SK-N-SH (cell line): ENCODE measurements at regions of chr10 and their contacts with region 1.

Region 1: DNA sequence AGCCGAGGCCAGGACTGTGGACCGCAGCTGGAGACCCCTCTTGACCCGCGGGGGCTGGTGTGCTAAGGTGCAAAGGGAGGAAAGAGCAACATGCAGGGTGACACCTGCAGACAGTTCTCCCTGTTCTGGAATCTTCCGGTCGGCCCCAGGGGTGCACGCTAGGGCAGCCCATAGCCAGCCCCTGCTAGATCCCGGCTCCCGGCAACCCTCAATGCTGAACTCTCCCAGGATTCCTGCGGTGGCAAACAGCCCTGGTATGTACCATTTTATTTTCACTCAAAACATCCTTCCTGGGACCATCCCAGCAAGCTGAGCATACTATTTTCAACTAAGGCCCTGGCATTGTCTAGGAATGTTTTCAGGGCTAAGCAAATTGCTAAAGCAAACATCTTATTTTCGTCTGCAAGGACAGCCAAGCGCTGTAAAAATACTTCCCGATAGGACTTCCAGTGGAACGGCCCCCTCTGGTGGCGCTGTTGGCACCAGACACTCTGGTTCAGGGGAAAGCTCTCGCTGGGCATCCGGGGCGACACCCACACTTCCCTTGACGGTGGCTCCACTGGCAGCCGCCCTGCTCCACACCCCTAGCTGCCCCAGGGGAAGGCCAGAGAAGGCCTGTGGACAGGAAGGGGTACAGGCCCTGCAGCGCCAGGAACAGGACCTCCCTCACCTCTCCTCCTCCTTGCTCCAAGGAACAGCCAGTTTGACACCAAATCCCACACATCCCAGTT is 99.4 kb downstream of the CTBP2 start:
- DNase-seq: peak; percentile 86
- H3K4me3 ChIP-seq: no peak overlapping the region
- H3K27ac ChIP-seq: peak overlapping the region; percentile 51 to 52; a peak in 3 of 4 replicates
- H3K4me1 ChIP-seq: peaks cover 48 to 62% of the 10 kb centered on the region in 2 experiments
- H3K27me3 ChIP-seq: no peaks in the 10 kb centered on the region
- CTCF ChIP-seq: peak; percentile 88
- EP300 ChIP-seq: no peak
- RAD21 ChIP-seq: peak; percentile 87

Region 2: DNA sequence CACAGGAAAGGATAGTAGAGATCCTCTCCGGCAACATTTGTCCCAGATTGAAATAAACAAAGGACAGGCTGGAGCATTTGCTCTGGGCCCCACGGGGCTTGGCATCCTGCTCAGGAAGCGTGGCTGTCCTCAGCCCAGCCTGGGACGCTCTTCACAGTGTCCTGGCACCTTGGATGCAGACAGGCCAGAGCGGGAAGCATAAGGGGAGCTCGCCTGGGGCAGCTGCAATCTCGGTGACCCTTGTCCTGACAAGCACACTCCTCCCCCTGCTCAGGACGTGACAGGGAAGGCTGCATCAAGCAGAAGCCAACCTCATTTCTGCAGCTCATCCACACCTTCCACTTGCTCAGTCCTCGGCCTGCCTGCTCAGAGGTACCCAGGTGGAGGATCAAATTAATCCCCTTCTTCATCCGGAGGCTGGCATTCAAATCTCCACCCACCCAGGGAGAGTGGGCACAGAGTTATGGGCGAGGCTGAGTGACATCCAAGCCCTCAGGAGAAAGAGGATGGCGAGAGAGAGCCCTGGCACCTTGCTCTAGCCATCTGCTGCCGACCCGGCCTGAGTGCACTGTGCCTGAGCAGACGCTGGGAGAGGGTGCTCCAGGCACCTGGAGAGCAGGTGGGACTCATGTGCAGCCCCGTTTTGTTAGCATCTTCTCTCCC is 211.7 kb before region 1 on chr10:
- CTCF ChIA-PET with region 1: no interaction called
- POLR2A ChIA-PET with region 1: no interaction called
- DNase-seq: no peak
- H3K4me3 ChIP-seq: no peak overlapping the region
- H3K27ac ChIP-seq: no peak overlapping the region
- H3K4me1 ChIP-seq: peaks cover 0 to 8% of the 10 kb centered on the region in 2 experiments; a peak in 1 of 4 replicates
- H3K27me3 ChIP-seq: no peaks in the 10 kb centered on the region
- CTCF ChIP-seq: no peak
- EP300 ChIP-seq: no peak
- RAD21 ChIP-seq: no peak

Region 3: DNA sequence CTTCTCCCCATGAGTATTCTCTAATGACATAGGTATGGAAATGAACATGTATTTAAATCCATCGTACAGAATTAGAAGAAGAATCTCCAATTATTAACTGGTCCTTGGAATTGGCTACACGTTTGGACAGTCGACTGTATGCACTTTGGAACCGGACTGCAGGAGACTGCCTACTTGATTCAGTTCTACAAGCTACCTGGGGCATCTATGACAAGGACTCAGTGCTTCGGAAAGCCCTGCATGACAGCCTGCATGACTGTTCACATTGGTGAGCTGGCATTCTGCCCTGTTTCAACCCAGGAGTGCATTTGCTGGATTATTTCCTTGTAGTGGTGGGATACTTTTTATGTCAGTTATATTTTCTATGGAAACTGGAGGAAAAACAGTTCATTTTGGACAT is 86.9 kb before region 1 on chr10:
- CTCF ChIA-PET with region 1: interaction called, 16 read pairs
- POLR2A ChIA-PET with region 1: no interaction called
- DNase-seq: no peak
- H3K4me3 ChIP-seq: no peak overlapping the region
- H3K27ac ChIP-seq: no peak overlapping the region
- H3K4me1 ChIP-seq: no peaks in the 10 kb centered on the region; a peak in 1 of 4 replicates
- H3K27me3 ChIP-seq: no peaks in the 10 kb centered on the region
- CTCF ChIP-seq: no peak
- EP300 ChIP-seq: no peak
- RAD21 ChIP-seq: no peak

Region 4: GRCh38 chr10:124992462-124993344 is 68.3 kb before region 1 on chr10:
- CTCF ChIA-PET with region 1: interaction called, 88 read pairs
- POLR2A ChIA-PET with region 1: interaction called, 4 read pairs
- DNase-seq: peak; percentile 59
- H3K4me3 ChIP-seq: no peak overlapping the region
- H3K27ac ChIP-seq: peak overlapping the region; percentile 2 to 14; a peak in 2 of 4 replicates
- H3K4me1 ChIP-seq: no peaks in the 10 kb centered on the region; a peak in 1 of 4 replicates
- H3K27me3 ChIP-seq: no peaks in the 10 kb centered on the region
- CTCF ChIP-seq: peak; percentile 75
- EP300 ChIP-seq: no peak
- RAD21 ChIP-seq: peak; percentile 72

Region 5: GRCh38 chr10:125006921-125007426 is 54.0 kb before region 1 on chr10:
- CTCF ChIA-PET with region 1: interaction called, 14 read pairs
- POLR2A ChIA-PET with region 1: interaction called, 8 read pairs
- DNase-seq: peak; percentile 92
- H3K4me3 ChIP-seq: no peak overlapping the region
- H3K27ac ChIP-seq: peak overlapping the region; percentile 12 to 98; a peak in 3 of 4 replicates
- H3K4me1 ChIP-seq: peaks cover 0 to 93% of the 10 kb centered on the region in 2 experiments; a peak in 2 of 4 replicates
- H3K27me3 ChIP-seq: no peaks in the 10 kb centered on the region
- CTCF ChIP-seq: no peak
- EP300 ChIP-seq: peak in 1 of 2 experiments; percentile 65; a peak in 1 of 4 replicates
- RAD21 ChIP-seq: no peak; the same call in 1 of the 2 replicates

Region 6: GRCh38 chr10:125038637-125039036 is 22.4 kb before region 1 on chr10:
- CTCF ChIA-PET with region 1: interaction called, 211 read pairs
- POLR2A ChIA-PET with region 1: no interaction called
- DNase-seq: no peak
- H3K4me3 ChIP-seq: no peak overlapping the region
- H3K27ac ChIP-seq: peak overlapping the region in 1 of 2 experiments; percentile 13; a peak in 1 of 4 replicates
- H3K4me1 ChIP-seq: peaks cover 56 to 66% of the 10 kb centered on the region in 2 experiments
- H3K27me3 ChIP-seq: no peaks in the 10 kb centered on the region
- CTCF ChIP-seq: 0 out of 2 replicates have a peak, but pooled peaks have one; percentile 12
- EP300 ChIP-seq: no peak
- RAD21 ChIP-seq: peak; percentile 47

Region 7: DNA sequence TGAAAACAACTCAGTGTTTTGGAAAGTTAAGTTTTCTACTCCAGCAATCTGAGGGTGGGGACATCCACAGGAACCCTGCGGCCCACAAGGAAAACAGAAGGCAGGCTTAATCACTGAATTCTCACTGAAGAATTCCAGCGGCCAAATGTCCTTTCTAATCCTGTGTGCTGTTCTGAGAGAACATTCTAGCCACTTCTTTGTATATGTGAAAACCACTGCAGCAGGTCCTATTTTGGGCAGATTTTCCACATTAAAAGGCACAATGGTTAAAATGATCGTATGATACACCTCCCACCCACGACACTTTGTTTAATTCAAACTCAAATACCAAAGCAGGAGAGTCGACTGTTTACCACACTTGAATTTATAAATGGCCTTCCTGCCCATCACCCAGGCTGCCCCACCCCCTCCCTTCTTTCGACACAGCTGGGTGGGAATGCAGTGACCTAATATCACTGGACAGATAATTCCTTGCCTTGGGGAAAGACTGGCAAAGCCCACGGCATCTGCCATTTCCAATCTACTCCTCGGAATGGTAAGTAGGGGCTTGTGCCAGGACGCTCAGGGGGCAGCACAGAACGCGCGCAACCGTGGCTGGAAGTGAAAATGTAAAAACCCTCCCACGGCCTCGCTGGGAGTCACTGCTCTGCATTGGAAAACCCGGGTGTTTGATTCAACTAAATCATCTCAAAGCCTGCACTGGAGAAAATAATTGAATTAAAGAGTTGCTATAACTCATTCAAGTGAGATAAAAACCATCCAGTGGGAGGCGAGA is 32.4 kb after region 1 on chr10:
- CTCF ChIA-PET with region 1: interaction called, 11 read pairs
- POLR2A ChIA-PET with region 1: no interaction called
- DNase-seq: peak; percentile 50
- H3K4me3 ChIP-seq: no peak overlapping the region
- H3K27ac ChIP-seq: peak overlapping the region in 1 of 2 experiments; percentile 19; a peak in 1 of 4 replicates
- H3K4me1 ChIP-seq: peaks cover 21 to 39% of the 10 kb centered on the region in 2 experiments; a peak in 2 of 4 replicates
- H3K27me3 ChIP-seq: no peaks in the 10 kb centered on the region
- CTCF ChIP-seq: no peak
- EP300 ChIP-seq: no peak
- RAD21 ChIP-seq: no peak